Activated T-helper 1 cell treated with anti-CD3 and anti-CD28 coated beads, Interleukin-12 subunit alpha, Interleukin-12 subunit beta, Interleukin-2, Interleukin-4 antibody, amounts not matched to agents 30 ng/mL and 10 ng/mL and 1 ng/mL, durations not matched to agents 14 hours and 24 hours and 36 hours (primary cell): ENCODE measurements at regions of chr5 and their contacts with region 1.

Region 1: DNA sequence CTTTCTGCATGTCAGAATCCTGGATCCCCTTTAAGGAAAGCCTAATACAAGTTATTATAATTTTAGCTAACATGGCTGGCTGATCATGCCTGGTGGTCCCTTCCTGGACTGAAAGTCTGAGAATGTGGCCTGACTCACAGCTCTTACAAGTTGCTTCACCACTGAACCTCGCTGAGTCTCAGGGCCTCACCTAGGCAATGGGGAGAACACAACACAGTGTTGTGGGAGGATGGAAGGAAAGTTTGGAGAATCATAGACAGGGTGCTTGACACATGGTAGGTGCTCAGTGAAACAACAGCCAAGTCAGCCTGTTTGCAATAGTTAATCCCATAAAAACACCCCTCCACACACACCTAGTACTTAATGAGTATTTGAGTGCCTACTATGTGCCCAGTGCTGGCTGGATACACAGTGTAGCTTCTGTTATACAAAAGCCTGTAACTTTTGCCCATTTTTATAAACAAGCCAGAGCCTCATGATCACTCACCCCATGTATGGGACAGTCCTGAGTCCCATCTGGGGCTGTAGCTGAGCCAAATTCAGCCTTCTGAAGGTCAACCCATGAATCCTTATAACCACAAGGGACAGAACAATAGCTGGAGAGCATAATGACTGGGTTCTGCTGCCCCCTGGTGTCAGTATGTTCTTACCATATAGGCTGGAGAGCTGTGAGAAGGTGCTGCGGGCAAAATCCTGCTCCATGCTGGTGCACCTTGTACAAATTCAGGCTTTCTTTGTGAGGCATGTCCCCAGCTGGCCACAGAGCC is 3.9 kb downstream of the ACSL6 start:
- DNase-seq: peak; percentile 67
- H3K4me3 Mint-ChIP-seq: peak overlapping the region; percentile 7
- H3K27ac Mint-ChIP-seq: peak overlapping the region; percentile 35
- H3K4me1 Mint-ChIP-seq: peaks cover 44% of the 10 kb centered on the region
- H3K27me3 Mint-ChIP-seq: peaks cover 41% of the 10 kb centered on the region

Region 2: GRCh38 chr5:131423056-131423455 is 584.5 kb before region 1 on chr5:
- intact Hi-C with region 1: loop called (anchors 5 kb)
- DNase-seq: no peak
- H3K4me3 Mint-ChIP-seq: no peak overlapping the region
- H3K27ac Mint-ChIP-seq: no peak overlapping the region
- H3K4me1 Mint-ChIP-seq: peaks cover 6% of the 10 kb centered on the region
- H3K27me3 Mint-ChIP-seq: no peaks in the 10 kb centered on the region

Region 3: GRCh38 chr5:131589510-131590348 is 417.9 kb before region 1 on chr5:
- intact Hi-C with region 1: loop called (anchors 1 kb)
- DNase-seq: no peak
- H3K4me3 Mint-ChIP-seq: no peak overlapping the region
- H3K27ac Mint-ChIP-seq: no peak overlapping the region
- H3K4me1 Mint-ChIP-seq: peaks cover 39% of the 10 kb centered on the region
- H3K27me3 Mint-ChIP-seq: peaks cover 1% of the 10 kb centered on the region

Region 4: GRCh38 chr5:131747180-131748105 is 260.1 kb before region 1 on chr5:
- intact Hi-C with region 1: loop called (anchors 2 kb)
- DNase-seq: no peak
- H3K4me3 Mint-ChIP-seq: peak overlapping the region; percentile 40
- H3K27ac Mint-ChIP-seq: peak overlapping the region; percentile 85
- H3K4me1 Mint-ChIP-seq: peaks cover 40% of the 10 kb centered on the region
- H3K27me3 Mint-ChIP-seq: no peaks in the 10 kb centered on the region

Region 5: GRCh38 chr5:131810510-131811249 is 196.9 kb before region 1 on chr5:
- intact Hi-C with region 1: loop called (anchors 1 kb)
- DNase-seq: no peak
- H3K4me3 Mint-ChIP-seq: no peak overlapping the region
- H3K27ac Mint-ChIP-seq: no peak overlapping the region
- H3K4me1 Mint-ChIP-seq: no peaks in the 10 kb centered on the region
- H3K27me3 Mint-ChIP-seq: peaks cover 17% of the 10 kb centered on the region

Region 6: GRCh38 chr5:132019857-132020555 is 12.4 kb after region 1 on chr5:
- intact Hi-C with region 1: loop called (anchors 1 kb)
- DNase-seq: peak; percentile 85
- H3K4me3 Mint-ChIP-seq: peak overlapping the region; percentile 50
- H3K27ac Mint-ChIP-seq: peak overlapping the region; percentile 92
- H3K4me1 Mint-ChIP-seq: peaks cover 51% of the 10 kb centered on the region
- H3K27me3 Mint-ChIP-seq: peaks cover 48% of the 10 kb centered on the region

Region 7: DNA sequence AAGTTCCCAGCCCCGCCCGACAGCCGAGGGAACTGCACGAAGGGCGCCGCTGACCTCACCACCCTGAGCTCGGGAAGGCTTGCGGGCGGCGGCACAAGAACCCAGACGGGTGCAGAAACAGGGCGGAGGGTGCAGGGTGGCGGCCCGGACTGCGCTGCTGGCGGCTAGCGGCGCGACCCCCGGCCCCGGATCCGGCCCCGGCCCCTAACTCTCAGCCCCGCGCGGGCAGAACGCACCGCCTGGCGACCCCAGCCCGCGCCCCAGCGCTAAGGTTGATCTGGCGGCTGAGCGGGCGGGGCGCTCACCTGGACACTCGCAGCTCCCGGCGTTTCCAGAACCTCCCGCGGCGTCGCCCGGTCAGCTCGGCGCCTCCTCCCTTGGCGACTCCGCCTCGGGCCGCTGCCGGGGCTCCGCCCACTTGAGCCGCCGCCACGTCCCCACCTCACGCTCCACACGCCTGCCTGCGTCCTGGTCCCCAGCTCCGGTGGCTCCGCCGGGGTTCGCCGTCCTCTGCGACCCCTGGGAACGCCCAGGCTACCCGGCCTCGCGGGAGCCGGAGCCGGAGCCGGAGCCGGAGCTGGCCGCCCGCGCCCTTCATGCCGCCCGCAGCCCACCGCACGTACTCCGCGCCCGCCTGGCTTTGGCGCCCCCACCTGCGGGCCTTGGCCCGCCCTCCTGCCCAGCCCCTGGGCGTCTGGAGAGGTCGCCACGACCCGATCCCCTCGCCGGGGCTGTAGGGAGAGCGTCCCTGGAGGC is 220.1 kb after region 1 on chr5 and contains the start of gene P4HA2:
- intact Hi-C with region 1: no loop called
- DNase-seq: peak; percentile 52
- H3K4me3 Mint-ChIP-seq: peak within 1 kb of the TSS; percentile 82
- H3K27ac Mint-ChIP-seq: no peak within 1 kb of the TSS
- H3K4me1 Mint-ChIP-seq: peaks cover 55% of the 10 kb centered on the region
- H3K27me3 Mint-ChIP-seq: peaks cover 14% of the 10 kb centered on the region
- total RNA-seq, gene P4HA2: 48.7 and 49.4 TPM in 2 replicates